Naive thymus-derived CD4-positive, alpha-beta T cell (primary cell): ENCODE measurements at regions of chr14 and their contacts with region 1.

Region 1: DNA sequence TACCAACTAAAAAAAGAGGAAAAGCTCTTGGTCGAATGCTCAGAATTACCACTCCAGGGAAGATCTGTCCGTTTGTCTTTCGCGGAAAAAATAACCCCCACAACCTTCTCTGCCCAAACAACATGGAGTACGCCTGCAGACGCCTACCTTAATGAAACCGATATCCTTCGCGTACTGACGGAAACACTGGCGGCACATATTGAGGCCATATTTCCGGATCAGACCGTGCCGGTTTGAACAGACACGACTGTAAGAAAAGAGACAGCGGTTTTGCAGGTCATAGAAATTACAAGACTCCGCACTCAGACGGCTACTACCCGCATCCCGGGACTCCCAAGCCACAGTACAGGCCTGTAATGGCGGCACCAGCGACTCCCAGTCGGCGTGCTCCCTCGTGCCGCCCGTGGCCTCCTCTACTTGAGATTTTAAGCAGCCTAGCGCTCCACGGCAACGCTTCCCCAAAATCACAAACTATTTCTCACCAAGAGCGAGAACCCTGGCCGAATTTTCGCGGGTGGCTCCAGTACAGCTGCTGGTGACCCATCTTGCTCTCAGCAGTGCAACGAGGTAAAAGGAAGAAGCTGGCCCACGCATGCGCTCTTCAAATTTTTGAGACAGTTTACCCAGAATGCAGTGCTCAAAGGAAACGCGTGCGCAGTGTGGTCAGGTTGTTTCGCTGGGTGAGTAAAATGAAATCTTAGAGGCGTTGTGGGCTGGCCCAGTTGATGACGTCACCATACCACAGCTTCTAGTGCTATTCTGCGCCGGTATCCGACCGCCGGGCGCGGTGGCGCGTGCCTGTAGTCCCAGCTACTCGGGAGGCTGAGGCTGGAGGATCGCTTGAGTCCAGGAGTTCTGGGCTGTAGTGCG is at the start of gene RPS29:
- DNase-seq: peak; percentile 97 to 99 (median 99)
- ATAC-seq: peak; percentile 91
- H3K4me3 ChIP-seq: peak within 1 kb of the TSS; percentile 98
- H3K4me3 Mint-ChIP-seq: peak within 1 kb of the TSS; percentile 87 to 100 (median 94)
- H3K27ac ChIP-seq: peak within 1 kb of the TSS; percentile 84
- H3K27ac Mint-ChIP-seq: peak within 1 kb of the TSS; percentile 90 to 100 (median 98)
- H3K4me1 ChIP-seq: peaks cover 19 to 21% of the 10 kb centered on the region in 2 donors
- H3K4me1 Mint-ChIP-seq: peaks cover 33 to 60% (median 46%) of the 10 kb centered on the region in 7 donors
- H3K27me3 ChIP-seq: no peaks in the 10 kb centered on the region
- H3K27me3 Mint-ChIP-seq: peaks cover 0 to 5% (median 0%) of the 10 kb centered on the region in 5 donors
- total RNA-seq, gene RPS29: 2,254 to 4,907 (median 2,729) TPM

Region 2: GRCh38 chr14:49497725-49498348 is 88.2 kb before region 1 on chr14:
- CTCF ChIA-PET with region 1: no interaction called
- POLR2A ChIA-PET with region 1: interaction called, 4 read pairs
- intact Hi-C with region 1: loop called in 1 of 2 experiments (anchors 1 kb)
- DNase-seq: peak in 7 of 9 donors; percentile 11 to 59 (median 40)
- ATAC-seq: peak; percentile 85
- H3K4me3 ChIP-seq: no peak overlapping the region
- H3K4me3 Mint-ChIP-seq: no peak overlapping the region
- H3K27ac ChIP-seq: no peak overlapping the region
- H3K27ac Mint-ChIP-seq: no peak overlapping the region
- H3K4me1 ChIP-seq: no peaks in the 10 kb centered on the region
- H3K4me1 Mint-ChIP-seq: peaks cover 0 to 5% (median 0%) of the 10 kb centered on the region in 7 donors
- H3K27me3 ChIP-seq: no peaks in the 10 kb centered on the region
- H3K27me3 Mint-ChIP-seq: peaks cover 5 to 32% (median 20%) of the 10 kb centered on the region in 5 donors

Region 3: DNA sequence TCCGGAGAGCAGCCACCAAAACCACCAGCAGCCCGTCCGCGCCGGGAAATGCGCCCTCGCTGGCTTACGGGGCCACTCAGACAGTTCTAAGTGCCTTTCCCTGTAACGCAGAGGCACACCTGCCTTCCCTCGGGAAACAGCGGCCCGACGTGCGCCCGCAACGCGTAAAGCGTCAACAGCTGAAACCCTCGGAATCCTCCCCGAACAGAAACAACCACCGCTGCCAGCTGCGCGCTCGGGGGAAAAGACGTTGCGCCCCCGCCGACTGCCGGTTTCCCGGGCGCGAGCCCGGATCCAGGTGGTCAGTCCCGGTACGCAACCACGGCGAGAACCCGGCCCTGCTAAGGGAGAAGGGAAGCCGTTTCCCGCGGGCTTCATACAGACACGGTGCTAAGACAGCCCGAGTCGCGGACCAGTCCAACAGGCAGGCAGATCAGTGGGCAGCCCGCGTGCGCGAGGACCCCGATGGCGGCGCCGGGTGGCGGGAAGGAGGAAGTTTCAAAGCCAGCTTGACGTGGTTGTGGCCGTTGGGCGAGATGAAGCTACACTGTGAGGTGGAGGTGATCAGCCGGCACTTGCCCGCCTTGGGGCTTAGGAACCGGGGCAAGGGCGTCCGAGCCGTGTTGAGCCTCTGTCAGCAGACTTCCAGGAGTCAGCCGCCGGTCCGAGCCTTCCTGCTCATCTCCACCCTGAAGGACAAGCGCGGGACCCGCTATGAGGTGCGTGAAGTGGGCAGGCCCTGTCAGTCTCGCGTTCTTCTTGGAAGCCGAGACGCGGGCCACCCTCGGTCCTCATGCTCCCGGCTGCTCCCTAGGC is 12.7 kb after region 1 on chr14 and contains the start of gene LRR1:
- CTCF ChIA-PET with region 1: interaction called, 15 read pairs
- POLR2A ChIA-PET with region 1: interaction called, 102 read pairs
- intact Hi-C with region 1: loop called (anchors 1 kb)
- DNase-seq: peak; percentile 74 to 91 (median 84)
- ATAC-seq: peak; percentile 93
- H3K4me3 ChIP-seq: peak within 1 kb of the TSS; percentile 94
- H3K4me3 Mint-ChIP-seq: peak within 1 kb of the TSS; percentile 91 to 100 (median 98)
- H3K27ac ChIP-seq: peak within 1 kb of the TSS; percentile 92
- H3K27ac Mint-ChIP-seq: peak within 1 kb of the TSS; percentile 95 to 99 (median 98)
- H3K4me1 ChIP-seq: peaks cover 0 to 5% of the 10 kb centered on the region in 2 donors
- H3K4me1 Mint-ChIP-seq: peaks cover 5 to 46% (median 37%) of the 10 kb centered on the region in 7 donors
- H3K27me3 ChIP-seq: no peaks in the 10 kb centered on the region
- H3K27me3 Mint-ChIP-seq: no peaks in the 10 kb centered on the region
- total RNA-seq, gene LRR1: 7.5 to 39.7 (median 13.3) TPM

Region 4: DNA sequence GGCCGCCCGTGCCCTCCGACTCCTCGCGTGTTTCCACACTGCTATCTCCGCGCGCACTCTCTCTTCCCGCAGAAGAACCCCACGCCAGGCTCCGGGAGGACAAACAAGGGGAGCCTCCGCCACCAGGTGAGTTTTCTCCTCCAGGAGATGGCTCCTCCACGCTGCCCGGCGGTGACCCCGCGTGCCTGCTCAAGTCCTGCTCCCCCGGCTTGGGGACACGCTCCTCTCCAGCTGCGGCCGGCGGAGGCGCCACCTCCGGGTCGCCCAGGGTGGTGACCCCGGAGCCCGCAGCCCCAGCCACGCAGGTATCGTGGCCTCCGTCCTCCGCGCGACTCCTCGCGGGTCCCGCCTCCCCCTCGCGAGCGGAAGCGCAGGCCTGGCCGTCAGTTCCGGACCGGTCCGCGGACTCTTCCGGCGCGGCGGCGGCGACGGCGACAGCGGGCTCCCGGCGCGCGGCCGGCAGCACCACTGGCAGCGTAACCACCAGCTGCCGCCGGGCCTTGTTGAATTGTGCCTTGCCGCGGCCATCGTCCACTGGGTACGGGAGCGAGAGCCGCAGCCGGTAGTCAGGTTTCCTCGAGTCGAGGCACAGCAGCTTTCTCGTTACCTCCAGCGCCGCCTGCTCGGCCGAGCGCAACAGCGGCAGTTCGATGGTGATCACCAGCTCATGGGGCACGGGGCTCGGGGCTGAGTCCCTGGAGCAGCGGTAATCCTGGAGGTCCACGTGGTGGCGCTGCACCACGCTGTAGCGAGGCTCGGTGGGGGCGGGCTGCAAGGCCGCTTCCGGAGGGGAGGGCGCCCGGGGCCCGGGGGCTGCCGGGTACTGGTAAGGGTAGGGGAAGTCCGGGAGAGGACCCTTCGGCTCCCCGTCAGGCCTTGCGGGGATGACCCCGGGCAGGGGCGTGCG is 47.9 kb after region 1 on chr14:
- CTCF ChIA-PET with region 1: interaction called, 7 read pairs
- POLR2A ChIA-PET with region 1: interaction called, 46 read pairs
- intact Hi-C with region 1: loop called (anchors 1 kb)
- DNase-seq: peak; percentile 89 to 96 (median 93)
- ATAC-seq: peak; percentile 92
- H3K4me3 ChIP-seq: peak overlapping the region; percentile 99
- H3K4me3 Mint-ChIP-seq: peak overlapping the region; percentile 81 to 99 (median 96)
- H3K27ac ChIP-seq: peak overlapping the region; percentile 96
- H3K27ac Mint-ChIP-seq: peak overlapping the region; percentile 71 to 96 (median 90)
- H3K4me1 ChIP-seq: peaks cover 19 to 29% of the 10 kb centered on the region in 2 donors
- H3K4me1 Mint-ChIP-seq: peaks cover 35 to 71% (median 52%) of the 10 kb centered on the region in 7 donors
- H3K27me3 ChIP-seq: no peaks in the 10 kb centered on the region
- H3K27me3 Mint-ChIP-seq: no peaks in the 10 kb centered on the region

Region 5: GRCh38 chr14:49767562-49768300 is 181.7 kb after region 1 on chr14 and contains the start of gene KLHDC2:
- CTCF ChIA-PET with region 1: no interaction called
- POLR2A ChIA-PET with region 1: interaction called, 32 read pairs
- intact Hi-C with region 1: loop called (anchors 1 kb)
- DNase-seq: peak; percentile 84 to 94 (median 89)
- ATAC-seq: peak; percentile 88
- H3K4me3 ChIP-seq: peak within 1 kb of the TSS; percentile 62
- H3K4me3 Mint-ChIP-seq: peak within 1 kb of the TSS; percentile 95 to 99 (median 98)
- H3K27ac ChIP-seq: peak within 1 kb of the TSS; percentile 96
- H3K27ac Mint-ChIP-seq: peak within 1 kb of the TSS; percentile 98 to 100 (median 99)
- H3K4me1 ChIP-seq: peaks cover 26 to 27% of the 10 kb centered on the region in 2 donors
- H3K4me1 Mint-ChIP-seq: peaks cover 20 to 46% (median 40%) of the 10 kb centered on the region in 7 donors
- H3K27me3 ChIP-seq: no peaks in the 10 kb centered on the region
- H3K27me3 Mint-ChIP-seq: peaks cover 0 to 2% (median 0%) of the 10 kb centered on the region in 5 donors
- total RNA-seq, gene KLHDC2: 33.2 to 105 (median 84.7) TPM

Region 6: GRCh38 chr14:50231475-50232275 is 645.6 kb after region 1 on chr14 and contains the start of gene SOS2:
- CTCF ChIA-PET with region 1: no interaction called
- POLR2A ChIA-PET with region 1: no interaction called
- intact Hi-C with region 1: loop called in 1 of 2 experiments (anchors 1 kb)
- DNase-seq: peak; percentile 71 to 84 (median 80)
- ATAC-seq: peak; percentile 92
- H3K4me3 ChIP-seq: peak within 1 kb of the TSS; percentile 89
- H3K4me3 Mint-ChIP-seq: peak within 1 kb of the TSS; percentile 80 to 97 (median 91)
- H3K27ac ChIP-seq: peak within 1 kb of the TSS; percentile 81
- H3K27ac Mint-ChIP-seq: peak within 1 kb of the TSS; percentile 90 to 96 (median 95)
- H3K4me1 ChIP-seq: peaks cover 6 to 17% of the 10 kb centered on the region in 2 donors
- H3K4me1 Mint-ChIP-seq: peaks cover 19 to 47% (median 42%) of the 10 kb centered on the region in 7 donors
- H3K27me3 ChIP-seq: no peaks in the 10 kb centered on the region
- H3K27me3 Mint-ChIP-seq: no peaks in the 10 kb centered on the region
- total RNA-seq, gene SOS2: 19.7 to 49.6 (median 38.7) TPM

Region 7: DNA sequence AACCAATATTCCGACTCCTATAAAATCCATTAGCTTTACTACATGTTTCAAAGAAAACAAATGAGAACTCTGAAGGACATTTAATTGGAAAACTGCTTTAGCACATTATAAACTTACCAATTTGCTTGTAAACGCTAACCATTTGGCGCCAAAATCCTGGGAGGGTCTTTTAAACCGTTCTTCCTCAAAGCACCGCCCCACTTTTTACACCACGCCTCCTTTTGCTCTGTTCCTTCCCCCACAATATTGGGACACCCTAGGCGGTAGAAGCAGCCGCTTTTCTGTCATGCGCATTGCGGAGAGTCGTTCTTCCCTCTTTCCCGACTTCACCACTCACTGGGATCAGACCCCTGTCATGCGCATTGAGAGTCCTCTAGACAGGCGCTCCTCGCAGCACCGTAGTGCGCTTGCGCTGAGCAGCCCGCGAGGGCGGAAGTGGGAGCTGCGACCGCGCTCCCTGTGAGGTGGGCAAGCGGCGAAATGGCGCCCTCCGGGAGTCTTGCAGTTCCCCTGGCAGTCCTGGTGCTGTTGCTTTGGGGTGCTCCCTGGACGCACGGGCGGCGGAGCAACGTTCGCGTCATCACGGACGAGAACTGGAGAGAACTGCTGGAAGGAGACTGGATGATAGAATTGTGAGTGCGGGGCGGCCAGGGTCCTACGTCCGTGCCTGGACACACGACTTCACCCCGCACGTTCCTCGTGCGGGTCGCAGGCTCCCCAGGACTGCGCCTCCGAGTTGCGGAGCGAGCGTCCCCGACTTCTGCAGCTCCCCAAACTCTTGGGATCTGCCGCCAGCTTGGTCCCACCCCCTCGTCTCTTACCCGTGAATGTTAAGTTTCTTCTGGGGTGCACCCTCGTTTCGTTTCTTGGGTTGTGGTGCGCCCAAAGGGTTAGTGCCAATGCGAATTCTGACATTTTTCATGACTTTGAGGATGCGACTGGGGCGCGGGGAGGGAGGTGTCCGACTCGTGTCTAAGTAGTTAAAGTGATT is 1654.1 kb after region 1 on chr14 and contains the start of gene TMX1:
- CTCF ChIA-PET with region 1: no interaction called
- POLR2A ChIA-PET with region 1: no interaction called
- intact Hi-C with region 1: loop called in 1 of 2 experiments (anchors 10 kb)
- DNase-seq: peak; percentile 70 to 88 (median 82)
- ATAC-seq: peak; percentile 94
- H3K4me3 ChIP-seq: peak within 1 kb of the TSS; percentile 99
- H3K4me3 Mint-ChIP-seq: no peak within 1 kb of the TSS
- H3K27ac ChIP-seq: peak within 1 kb of the TSS; percentile 81
- H3K27ac Mint-ChIP-seq: no peak within 1 kb of the TSS
- H3K4me1 ChIP-seq: peaks cover 16 to 17% of the 10 kb centered on the region in 2 donors
- H3K4me1 Mint-ChIP-seq: peaks cover 0 to 29% (median 20%) of the 10 kb centered on the region in 7 donors
- H3K27me3 ChIP-seq: no peaks in the 10 kb centered on the region
- H3K27me3 Mint-ChIP-seq: no peaks in the 10 kb centered on the region
- total RNA-seq, gene TMX1: 13.3 to 48.3 (median 23.1) TPM